CD4-positive, alpha-beta T cell (primary cell): ENCODE measurements at regions of chr12 and their contacts with region 1.

Region 1: DNA sequence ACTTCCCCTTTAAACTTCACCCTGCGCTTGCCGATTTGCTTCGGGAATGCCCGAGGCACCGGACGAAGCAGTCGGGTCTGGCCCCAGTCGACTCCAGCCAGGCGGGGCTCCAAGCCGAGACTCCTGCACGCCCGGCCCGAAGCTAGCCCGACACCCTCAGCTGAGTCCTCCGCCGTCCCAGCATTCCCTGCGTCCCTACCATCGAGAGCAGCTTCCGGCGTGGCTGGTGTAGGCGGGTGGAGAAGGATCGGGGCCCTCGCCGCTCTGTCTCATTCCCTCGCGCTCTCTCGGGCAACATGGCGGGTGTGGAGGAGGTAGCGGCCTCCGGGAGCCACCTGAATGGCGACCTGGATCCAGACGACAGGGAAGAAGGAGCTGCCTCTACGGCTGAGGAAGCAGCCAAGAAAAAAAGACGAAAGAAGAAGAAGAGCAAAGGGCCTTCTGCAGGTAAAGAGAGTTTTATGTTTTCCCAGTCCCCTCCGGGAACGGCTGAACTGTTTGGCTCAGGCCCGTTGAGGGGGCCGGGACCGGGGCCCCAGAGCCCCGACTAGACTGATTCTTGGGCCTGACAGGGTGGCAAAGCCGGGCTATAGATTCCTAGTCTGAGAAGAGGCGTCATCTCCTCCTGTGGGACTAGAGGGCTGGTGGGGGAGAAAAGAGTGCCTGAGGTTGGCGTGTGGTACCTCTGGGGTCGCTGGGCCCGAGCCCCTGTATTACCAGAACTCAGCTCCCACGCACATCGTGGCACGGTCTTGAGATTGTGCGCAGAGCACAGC is at the start of gene METAP2:
- DNase-seq: peak; percentile 82 to 95 (median 88)
- ATAC-seq: peak; percentile 96
- H3K4me3 ChIP-seq: peak within 1 kb of the TSS; percentile 92
- H3K4me3 Mint-ChIP-seq: peak within 1 kb of the TSS; percentile 100
- H3K27ac ChIP-seq: peak within 1 kb of the TSS; percentile 56 to 79
- H3K27ac Mint-ChIP-seq: peak within 1 kb of the TSS; percentile 92
- H3K4me1 ChIP-seq: peaks cover 32% of the 10 kb centered on the region
- H3K4me1 Mint-ChIP-seq: peaks cover 67% of the 10 kb centered on the region
- H3K27me3 ChIP-seq: no peaks in the 10 kb centered on the region
- H3K27me3 Mint-ChIP-seq: no peaks in the 10 kb centered on the region
- CTCF ChIP-seq: no peak
- total RNA-seq, gene METAP2: 60.2 to 66.3 TPM

Region 2: DNA sequence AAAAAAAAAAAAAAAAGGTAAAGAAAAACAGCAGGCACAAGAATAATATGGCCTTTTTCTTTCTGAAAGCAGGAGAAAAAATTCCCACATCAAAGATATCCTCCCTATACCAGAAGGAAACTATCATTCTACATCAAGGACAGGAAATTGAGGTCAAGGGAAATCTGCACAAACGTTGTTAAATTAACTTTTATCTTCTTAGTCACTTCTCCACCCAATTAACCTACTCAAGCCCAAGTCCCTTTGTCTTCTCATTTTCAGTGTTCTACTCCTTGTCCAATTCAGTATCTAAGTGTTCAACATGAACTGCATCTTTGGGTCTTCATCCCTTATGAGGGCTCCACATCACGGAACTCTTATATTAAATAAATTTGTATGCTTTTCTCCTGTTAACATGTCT is 486.3 kb before region 1 on chr12:
- CTCF ChIA-PET with region 1: no interaction called
- POLR2A ChIA-PET with region 1: interaction called, 11 read pairs
- intact Hi-C with region 1: no loop called
- DNase-seq: peak in 3 of 14 experiments; percentile 70 to 79 (median 76)
- ATAC-seq: peak; percentile 57
- H3K4me3 ChIP-seq: no peak overlapping the region
- H3K4me3 Mint-ChIP-seq: peak overlapping the region; percentile 56
- H3K27ac ChIP-seq: peak overlapping the region; percentile 54 to 64
- H3K27ac Mint-ChIP-seq: peak overlapping the region; percentile 97
- H3K4me1 ChIP-seq: peaks cover 62% of the 10 kb centered on the region
- H3K4me1 Mint-ChIP-seq: peaks cover 74% of the 10 kb centered on the region
- H3K27me3 ChIP-seq: no peaks in the 10 kb centered on the region
- H3K27me3 Mint-ChIP-seq: no peaks in the 10 kb centered on the region
- CTCF ChIP-seq: no peak

Region 3: GRCh38 chr12:95368931-95369330 is 105.1 kb before region 1 on chr12:
- CTCF ChIA-PET with region 1: no interaction called
- POLR2A ChIA-PET with region 1: no interaction called
- intact Hi-C with region 1: no loop called
- DNase-seq: no peak
- ATAC-seq: no peak
- H3K4me3 ChIP-seq: no peak overlapping the region
- H3K4me3 Mint-ChIP-seq: no peak overlapping the region
- H3K27ac ChIP-seq: no peak overlapping the region
- H3K27ac Mint-ChIP-seq: no peak overlapping the region
- H3K4me1 ChIP-seq: no peaks in the 10 kb centered on the region
- H3K4me1 Mint-ChIP-seq: no peaks in the 10 kb centered on the region
- H3K27me3 ChIP-seq: no peaks in the 10 kb centered on the region
- H3K27me3 Mint-ChIP-seq: no peaks in the 10 kb centered on the region
- CTCF ChIP-seq: no peak

Region 4: GRCh38 chr12:95428472-95428871 is 45.6 kb before region 1 on chr12:
- CTCF ChIA-PET with region 1: no interaction called
- POLR2A ChIA-PET with region 1: interaction called, 14 read pairs
- intact Hi-C with region 1: loop called in 1 of 2 experiments (anchors 5 kb)
- DNase-seq: peak in 9 of 14 experiments; percentile 2 to 64 (median 22)
- ATAC-seq: peak; percentile 95
- H3K4me3 ChIP-seq: no peak overlapping the region
- H3K4me3 Mint-ChIP-seq: peak overlapping the region; percentile 32
- H3K27ac ChIP-seq: no peak overlapping the region
- H3K27ac Mint-ChIP-seq: peak overlapping the region; percentile 78
- H3K4me1 ChIP-seq: peaks cover 6% of the 10 kb centered on the region
- H3K4me1 Mint-ChIP-seq: peaks cover 11% of the 10 kb centered on the region
- H3K27me3 ChIP-seq: no peaks in the 10 kb centered on the region
- H3K27me3 Mint-ChIP-seq: no peaks in the 10 kb centered on the region
- CTCF ChIP-seq: no peak